ENCODE measurements at regions of chr17 and their contacts with region 1.

Region 1: DNA sequence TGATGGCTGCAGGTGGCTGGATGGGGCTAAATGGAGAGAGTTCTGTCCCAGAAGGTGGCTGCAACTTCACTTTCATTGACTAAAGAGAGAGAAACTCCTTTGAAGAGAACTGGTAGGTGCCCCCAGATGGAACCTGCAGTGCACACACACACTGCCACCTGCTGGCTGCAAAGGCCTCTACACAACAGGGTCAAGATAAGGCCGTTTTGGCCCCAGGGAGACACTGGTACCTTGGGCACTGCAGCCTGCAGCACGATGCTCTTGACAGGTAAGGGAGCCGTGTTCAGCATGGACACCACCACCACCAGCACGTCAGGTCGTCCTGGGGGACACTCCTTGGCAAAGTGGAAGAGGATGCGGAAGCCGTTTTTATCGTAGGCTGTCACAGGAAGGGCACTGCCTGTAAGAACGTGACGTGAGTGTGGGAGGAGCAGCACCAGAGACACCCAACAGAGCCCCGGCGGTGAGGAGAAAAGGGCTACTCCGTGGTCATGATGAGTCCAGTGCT is 22.7 kb downstream of the GGA3 start:
- DNase-seq: peak; percentile 38 to 68 (median 49)
- H3K4me3 ChIP-seq: no peak overlapping the region
- H3K4me3 Mint-ChIP-seq: peak overlapping the region in 6 of 7 donors; percentile 21 to 39 (median 36)
- H3K27ac ChIP-seq: no peak overlapping the region
- H3K27ac Mint-ChIP-seq: peak overlapping the region; percentile 58 to 97 (median 92)
- H3K4me1 ChIP-seq: peaks cover 29% of the 10 kb centered on the region
- H3K4me1 Mint-ChIP-seq: peaks cover 31 to 41% (median 31%) of the 10 kb centered on the region in 3 donors
- H3K27me3 ChIP-seq: no peaks in the 10 kb centered on the region
- H3K27me3 Mint-ChIP-seq: no peaks in the 10 kb centered on the region

Region 2: DNA sequence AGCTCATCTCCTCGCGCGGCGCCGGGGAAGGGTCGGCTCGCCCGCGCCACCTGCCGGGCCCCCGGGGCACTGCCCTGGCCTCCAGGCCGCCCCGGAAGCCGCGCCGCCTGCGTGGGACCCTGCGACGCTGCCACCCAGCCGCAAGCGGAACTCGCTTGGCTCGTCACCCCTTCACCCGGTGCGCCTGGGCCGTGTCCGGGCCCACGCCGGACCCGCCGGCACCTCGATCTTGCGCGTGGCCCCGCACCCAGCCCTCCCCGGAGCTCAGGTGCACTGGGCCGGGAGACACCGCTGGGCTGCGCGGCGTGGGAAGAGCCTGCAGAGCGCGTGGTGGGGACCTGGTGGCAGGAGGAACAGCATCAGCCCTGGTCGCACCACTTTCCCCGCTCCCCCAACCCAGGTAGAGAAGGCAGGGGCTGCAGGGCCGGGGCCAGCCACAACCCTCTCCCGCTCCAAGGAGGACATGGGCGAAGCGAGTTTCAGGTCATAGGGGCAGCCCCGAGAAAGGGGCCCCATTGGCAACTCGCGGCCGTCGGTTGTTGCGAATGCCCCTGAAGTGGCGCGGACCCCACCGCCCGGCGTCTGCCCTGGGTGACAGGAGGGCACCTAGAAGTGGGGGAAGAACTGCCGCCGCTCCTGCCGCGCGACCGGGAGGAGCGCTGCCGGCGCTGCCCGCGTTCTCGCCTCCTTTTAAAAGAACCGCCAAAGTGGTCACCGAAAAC is 32.7 kb after region 1 on chr17:
- CTCF ChIA-PET with region 1: interaction called, 14 read pairs
- POLR2A ChIA-PET with region 1: interaction called, 6 read pairs
- DNase-seq: peak; percentile 83 to 92 (median 90)
- H3K4me3 ChIP-seq: peak overlapping the region; percentile 72
- H3K4me3 Mint-ChIP-seq: peak overlapping the region; percentile 77 to 92 (median 83)
- H3K27ac ChIP-seq: peak overlapping the region; percentile 89
- H3K27ac Mint-ChIP-seq: peak overlapping the region; percentile 72 to 94 (median 90)
- H3K4me1 ChIP-seq: peaks cover 19% of the 10 kb centered on the region
- H3K4me1 Mint-ChIP-seq: peaks cover 20 to 35% (median 23%) of the 10 kb centered on the region in 3 donors
- H3K27me3 ChIP-seq: no peaks in the 10 kb centered on the region
- H3K27me3 Mint-ChIP-seq: peaks cover 0 to 1% of the 10 kb centered on the region in 2 donors

Region 3: GRCh38 chr17:75313941-75314551 is 75.3 kb after region 1 on chr17:
- CTCF ChIA-PET with region 1: no interaction called
- POLR2A ChIA-PET with region 1: no interaction called
- DNase-seq: no peak
- H3K4me3 ChIP-seq: no peak overlapping the region
- H3K4me3 Mint-ChIP-seq: no peak overlapping the region
- H3K27ac ChIP-seq: no peak overlapping the region
- H3K27ac Mint-ChIP-seq: peak overlapping the region in 6 of 8 donors; percentile 4 to 75 (median 46)
- H3K4me1 ChIP-seq: peaks cover 5% of the 10 kb centered on the region
- H3K4me1 Mint-ChIP-seq: peaks cover 0 to 4% (median 4%) of the 10 kb centered on the region in 3 donors
- H3K27me3 ChIP-seq: no peaks in the 10 kb centered on the region
- H3K27me3 Mint-ChIP-seq: no peaks in the 10 kb centered on the region